ENCODE measurements at regions of chr4 and their contacts with region 1.

Region 1: DNA sequence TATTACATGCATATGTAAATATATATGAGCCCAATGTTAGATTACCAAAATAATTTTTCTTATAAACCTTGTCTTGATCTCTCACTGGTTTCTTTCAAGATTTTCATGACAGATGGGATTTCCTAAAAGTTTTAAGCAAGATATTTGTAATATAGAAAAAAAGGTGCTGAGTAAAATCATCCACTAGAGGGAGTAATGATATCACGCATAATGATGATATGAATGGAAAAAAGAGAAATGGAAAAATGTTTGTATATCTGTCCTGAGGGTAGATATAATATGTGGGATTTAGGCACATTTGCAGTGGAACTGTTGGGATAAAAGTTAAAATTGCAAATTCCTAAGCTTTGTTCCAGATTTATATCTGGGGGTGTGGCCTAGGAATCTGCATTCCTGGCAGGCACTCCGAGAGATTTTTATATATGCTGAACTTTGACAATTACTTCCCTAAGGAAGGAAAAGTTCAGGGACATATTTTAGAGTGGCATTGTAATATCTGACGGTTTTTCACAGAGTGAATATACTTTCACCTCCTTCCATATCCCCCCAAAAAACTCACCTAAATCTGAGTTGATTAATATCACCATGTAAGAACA is 60.5 kb downstream of the TMA16 start:
- DNase-seq: no peak
- H3K4me3 Mint-ChIP-seq: no peak overlapping the region
- H3K27ac Mint-ChIP-seq: no peak overlapping the region
- H3K4me1 Mint-ChIP-seq: peaks cover 22% of the 10 kb centered on the region
- H3K27me3 Mint-ChIP-seq: peaks cover 3% of the 10 kb centered on the region

Region 2: DNA sequence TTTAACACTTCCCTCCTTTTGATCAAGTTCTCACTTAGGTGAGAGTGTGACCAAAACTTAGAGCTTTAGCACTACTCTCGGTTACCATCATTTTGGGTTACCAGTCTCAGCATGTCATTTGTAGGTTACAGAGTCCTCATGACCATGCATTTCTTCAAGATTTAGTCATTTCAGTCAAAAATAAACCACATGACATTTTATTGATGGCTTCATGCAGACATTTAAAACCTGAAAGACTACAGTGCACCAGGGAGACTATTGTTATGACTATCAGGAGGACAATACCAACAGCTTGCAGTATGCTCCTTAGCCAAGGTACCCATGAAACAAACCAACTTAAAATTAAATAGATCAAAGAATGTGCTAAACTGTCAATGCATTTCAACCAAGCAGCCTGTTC is 893.1 kb before region 1 on chr4:
- intact Hi-C with region 1: no loop called
- DNase-seq: no peak
- H3K4me3 Mint-ChIP-seq: no peak overlapping the region
- H3K27ac Mint-ChIP-seq: no peak overlapping the region
- H3K4me1 Mint-ChIP-seq: no peaks in the 10 kb centered on the region
- H3K27me3 Mint-ChIP-seq: no peaks in the 10 kb centered on the region

Region 3: GRCh38 chr4:163157157-163157556 is 397.8 kb before region 1 on chr4:
- intact Hi-C with region 1: no loop called
- DNase-seq: no peak
- H3K4me3 Mint-ChIP-seq: no peak overlapping the region
- H3K27ac Mint-ChIP-seq: no peak overlapping the region
- H3K4me1 Mint-ChIP-seq: peaks cover 26% of the 10 kb centered on the region
- H3K27me3 Mint-ChIP-seq: no peaks in the 10 kb centered on the region

Region 4: DNA sequence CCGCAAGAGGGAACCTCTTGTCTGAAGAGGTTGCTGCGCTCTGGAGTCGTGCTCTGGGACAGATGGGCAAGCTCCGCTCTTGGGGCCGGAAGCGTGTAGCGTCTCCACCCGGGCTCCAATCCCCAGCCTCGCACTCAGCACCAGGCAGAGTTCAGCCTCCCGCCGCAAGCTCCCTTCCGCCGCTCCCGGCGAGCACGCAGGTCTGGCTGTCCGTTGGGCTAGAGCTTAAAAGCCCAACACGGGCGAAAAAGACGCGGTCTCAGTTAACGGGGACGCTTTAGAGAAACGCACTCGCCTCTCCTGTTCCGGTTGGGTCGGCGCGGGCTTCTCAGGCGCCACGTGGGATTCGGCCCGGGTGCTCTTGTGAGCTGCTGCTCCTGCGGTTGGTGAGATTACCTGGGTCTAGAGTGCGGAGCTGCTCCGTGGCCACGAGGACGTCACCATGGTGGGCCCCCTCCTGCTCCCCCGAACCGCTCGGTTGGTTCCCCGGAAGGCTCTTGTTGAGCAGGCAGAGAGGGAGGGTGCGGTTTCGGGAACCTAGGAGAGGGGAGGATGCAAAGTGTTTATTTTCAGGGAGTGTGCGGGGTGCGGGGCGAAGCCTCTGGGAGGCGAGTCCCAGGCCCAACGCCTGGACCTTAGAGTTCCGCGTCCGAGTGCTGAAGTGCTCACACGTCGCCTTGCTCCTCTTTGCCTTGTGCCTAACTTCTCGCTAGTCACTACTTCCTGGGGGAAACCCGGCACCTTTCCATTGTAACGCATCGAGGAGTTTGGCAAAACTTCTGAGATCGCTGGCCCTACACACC is 60.4 kb before region 1 on chr4 and contains the start of gene TMA16:
- intact Hi-C with region 1: loop called (anchors 1 kb)
- DNase-seq: peak; percentile 84
- H3K4me3 Mint-ChIP-seq: peak within 1 kb of the TSS; percentile 90
- H3K27ac Mint-ChIP-seq: peak within 1 kb of the TSS; percentile 98
- H3K4me1 Mint-ChIP-seq: peaks cover 23% of the 10 kb centered on the region
- H3K27me3 Mint-ChIP-seq: peaks cover 3% of the 10 kb centered on the region
- total RNA-seq, gene TMA16: 76.3 and 80.8 TPM in 2 replicates

Region 5: GRCh38 chr4:163638909-163639308 is 83.9 kb after region 1 on chr4:
- intact Hi-C with region 1: no loop called
- DNase-seq: no peak
- H3K4me3 Mint-ChIP-seq: no peak overlapping the region
- H3K27ac Mint-ChIP-seq: no peak overlapping the region
- H3K4me1 Mint-ChIP-seq: no peaks in the 10 kb centered on the region
- H3K27me3 Mint-ChIP-seq: no peaks in the 10 kb centered on the region

Region 6: GRCh38 chr4:163755013-163755412 is 200.0 kb after region 1 on chr4:
- intact Hi-C with region 1: loop called (anchors 1 kb)
- DNase-seq: no peak
- H3K4me3 Mint-ChIP-seq: no peak overlapping the region
- H3K27ac Mint-ChIP-seq: no peak overlapping the region
- H3K4me1 Mint-ChIP-seq: no peaks in the 10 kb centered on the region
- H3K27me3 Mint-ChIP-seq: no peaks in the 10 kb centered on the region

Region 7: GRCh38 chr4:164731827-164732474 is 1177.0 kb after region 1 on chr4:
- intact Hi-C with region 1: loop called (anchors 2 kb)
- DNase-seq: no peak
- H3K4me3 Mint-ChIP-seq: no peak overlapping the region
- H3K27ac Mint-ChIP-seq: no peak overlapping the region
- H3K4me1 Mint-ChIP-seq: no peaks in the 10 kb centered on the region
- H3K27me3 Mint-ChIP-seq: peaks cover 3% of the 10 kb centered on the region

Region 8: GRCh38 chr4:165096776-165097175 is 1541.8 kb after region 1 on chr4:
- intact Hi-C with region 1: loop called (anchors 2 kb)
- DNase-seq: no peak
- H3K4me3 Mint-ChIP-seq: no peak overlapping the region
- H3K27ac Mint-ChIP-seq: no peak overlapping the region
- H3K4me1 Mint-ChIP-seq: no peaks in the 10 kb centered on the region
- H3K27me3 Mint-ChIP-seq: no peaks in the 10 kb centered on the region

Measured in activated T-helper 1 cell treated with anti-CD3 and anti-CD28 coated beads, Interleukin-12 subunit alpha, Interleukin-12 subunit beta, Interleukin-2, Interleukin-4 antibody, amounts not matched to agents 30 ng/mL and 10 ng/mL and 1 ng/mL, durations not matched to agents 14 hours and 24 hours and 36 hours (primary cell).